Astrocyte of the cerebellum (primary cell): ENCODE measurements at regions of chr21 and their contacts with region 1.

Region 1: GRCh38 chr21:18960306-18960705 is 556.7 kb upstream of the TMPRSS15 start:
- DNase-seq: no peak
- H3K4me3 ChIP-seq: no peak overlapping the region
- CTCF ChIP-seq: no peak

Region 2: GRCh38 chr21:18931237-18931636 is 29.1 kb before region 1 on chr21:
- in situ Hi-C with region 1: loop called (anchors 5 kb)
- DNase-seq: no peak
- H3K4me3 ChIP-seq: no peak overlapping the region
- CTCF ChIP-seq: no peak

Region 3: GRCh38 chr21:18987520-18988026 is 27.3 kb after region 1 on chr21:
- in situ Hi-C with region 1: no loop called
- DNase-seq: no peak
- H3K4me3 ChIP-seq: no peak overlapping the region
- CTCF ChIP-seq: no peak